Vagina (tissue), 2 donors: ENCODE measurements at regions of chr6 and their contacts with region 1.

Region 1: GRCh38 chr6:31403283-31403989 is at the start of gene MICA:
- DNase-seq: peak in 1 of 2 donors; percentile 95
- H3K4me3 ChIP-seq: peak within 1 kb of the TSS; percentile 76 to 94
- H3K27ac ChIP-seq: peak within 1 kb of the TSS; percentile 99
- H3K4me1 ChIP-seq: peaks cover 71% of the 10 kb centered on the region
- H3K27me3 ChIP-seq: no peaks in the 10 kb centered on the region
- CTCF ChIP-seq: no peak
- POLR2A ChIP-seq: peak in 1 of 2 donors; percentile 61
- total RNA-seq, gene MICA: 19.9 TPM

Region 2: GRCh38 chr6:31441365-31442267 is 38.2 kb after region 1 on chr6:
- intact Hi-C with region 1: loop called (anchors 5 kb)
- DNase-seq: peak; percentile 85 to 87
- H3K4me3 ChIP-seq: peak overlapping the region in 1 of 2 donors; percentile 37
- H3K27ac ChIP-seq: no peak overlapping the region
- H3K4me1 ChIP-seq: no peaks in the 10 kb centered on the region
- H3K27me3 ChIP-seq: no peaks in the 10 kb centered on the region
- CTCF ChIP-seq: peak; percentile 61 to 87 (median 79)
- POLR2A ChIP-seq: no peak